Right cardiac atrium (tissue), 5 donors: ENCODE measurements at regions of chr18 and their contacts with region 1.

Region 1: DNA sequence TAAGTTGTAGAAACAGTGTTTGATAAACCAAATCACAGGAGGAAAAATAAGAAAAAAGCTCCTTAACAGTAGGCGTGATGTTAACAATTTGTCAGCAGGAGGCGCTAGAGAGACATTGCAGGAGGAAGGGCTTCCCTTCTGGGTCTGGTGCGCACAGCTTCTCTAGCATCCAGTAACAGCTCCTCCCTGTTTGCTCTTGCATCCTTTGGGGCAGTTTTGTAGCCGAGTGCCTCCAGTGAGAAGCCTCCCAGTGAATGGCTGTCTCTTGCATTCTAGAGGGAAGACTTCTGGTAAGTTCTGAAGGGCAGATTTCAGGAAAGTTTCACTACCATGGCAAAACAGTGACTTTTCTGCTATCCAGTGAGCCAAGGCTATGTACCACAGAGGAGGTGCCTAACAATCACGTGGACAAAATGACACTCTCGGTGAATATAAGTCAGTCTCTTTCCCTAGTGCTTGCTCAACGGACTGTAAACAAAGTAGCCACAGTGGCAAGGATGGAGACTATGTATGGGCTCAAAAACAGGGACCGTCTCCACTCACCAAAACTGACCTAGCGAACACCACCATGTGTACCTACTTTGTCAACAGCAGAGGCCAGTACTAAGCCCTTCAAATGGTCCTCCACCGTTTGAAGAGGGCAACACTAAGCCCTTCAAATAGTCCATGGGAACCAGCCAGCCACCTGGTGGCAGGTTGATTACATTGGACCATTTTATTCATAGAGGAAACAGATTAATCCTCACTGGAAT is 9.6 kb upstream of the ZNF396 start:
- DNase-seq: peak; percentile 55 to 73 (median 64)
- ATAC-seq: peak; percentile 81 to 82
- H3K4me3 ChIP-seq: no peak overlapping the region
- H3K27ac ChIP-seq: no peak overlapping the region
- H3K4me1 ChIP-seq: no peaks in the 10 kb centered on the region
- H3K27me3 ChIP-seq: no peaks in the 10 kb centered on the region

Region 2: DNA sequence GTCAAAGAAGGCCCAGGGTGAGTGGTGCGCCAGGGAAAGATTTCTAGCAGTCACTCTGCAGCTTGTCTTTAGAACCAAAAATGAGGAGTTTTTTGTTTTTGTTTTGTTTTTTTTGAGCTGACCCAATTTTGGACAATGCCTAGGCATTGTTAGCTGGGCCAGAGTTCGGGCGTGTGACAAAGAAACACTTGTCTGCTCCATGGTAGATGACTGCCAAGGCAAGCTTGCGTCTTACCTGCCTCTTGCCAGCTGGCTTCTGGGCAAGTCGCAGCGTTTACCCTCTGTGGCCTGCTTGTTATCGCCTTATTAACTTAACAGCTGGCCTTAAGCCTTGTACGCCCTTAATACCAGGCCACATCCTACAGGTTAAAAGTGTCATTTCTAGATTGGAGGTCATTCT is 309.0 kb after region 1 on chr18:
- intact Hi-C with region 1: loop called in 1 of 4 experiments (anchors 10 kb)
- DNase-seq: peak; percentile 80 to 91 (median 90)
- ATAC-seq: peak; percentile 93 to 96
- H3K4me3 ChIP-seq: no peak overlapping the region
- H3K27ac ChIP-seq: no peak overlapping the region
- H3K4me1 ChIP-seq: peaks cover 3% of the 10 kb centered on the region
- H3K27me3 ChIP-seq: no peaks in the 10 kb centered on the region

Region 3: GRCh38 chr18:35730691-35731370 is 344.1 kb after region 1 on chr18:
- intact Hi-C with region 1: loop called in 1 of 4 experiments (anchors 10 kb)
- DNase-seq: peak in 2 of 3 donors; percentile 54 to 73
- ATAC-seq: peak; percentile 25 to 55
- H3K4me3 ChIP-seq: no peak overlapping the region
- H3K27ac ChIP-seq: no peak overlapping the region
- H3K4me1 ChIP-seq: no peaks in the 10 kb centered on the region
- H3K27me3 ChIP-seq: no peaks in the 10 kb centered on the region

Region 4: GRCh38 chr18:35949903-35950627 is 563.3 kb after region 1 on chr18:
- intact Hi-C with region 1: loop called in 1 of 4 experiments (anchors 10 kb)
- DNase-seq: peak; percentile 53 to 82 (median 78)
- ATAC-seq: peak; percentile 83 to 88
- H3K4me3 ChIP-seq: peak overlapping the region; percentile 76
- H3K27ac ChIP-seq: no peak overlapping the region
- H3K4me1 ChIP-seq: no peaks in the 10 kb centered on the region
- H3K27me3 ChIP-seq: no peaks in the 10 kb centered on the region